PC-3 (cell line): ENCODE measurements at regions of chr16 and their contacts with region 1.

Region 1: GRCh38 chr16:70746708-70747424 is 54.1 kb downstream of the VAC14 start:
- DNase-seq: peak; percentile 94
- ATAC-seq: peak; percentile 89
- H3K4me3 ChIP-seq: peak overlapping the region; percentile 12; the same call in 1 of the 2 replicates
- H3K27ac ChIP-seq: peak overlapping the region; percentile 99
- H3K4me1 ChIP-seq: peaks cover 36% of the 10 kb centered on the region
- H3K27me3 ChIP-seq: no peaks in the 10 kb centered on the region
- CTCF ChIP-seq: no peak

Region 2: DNA sequence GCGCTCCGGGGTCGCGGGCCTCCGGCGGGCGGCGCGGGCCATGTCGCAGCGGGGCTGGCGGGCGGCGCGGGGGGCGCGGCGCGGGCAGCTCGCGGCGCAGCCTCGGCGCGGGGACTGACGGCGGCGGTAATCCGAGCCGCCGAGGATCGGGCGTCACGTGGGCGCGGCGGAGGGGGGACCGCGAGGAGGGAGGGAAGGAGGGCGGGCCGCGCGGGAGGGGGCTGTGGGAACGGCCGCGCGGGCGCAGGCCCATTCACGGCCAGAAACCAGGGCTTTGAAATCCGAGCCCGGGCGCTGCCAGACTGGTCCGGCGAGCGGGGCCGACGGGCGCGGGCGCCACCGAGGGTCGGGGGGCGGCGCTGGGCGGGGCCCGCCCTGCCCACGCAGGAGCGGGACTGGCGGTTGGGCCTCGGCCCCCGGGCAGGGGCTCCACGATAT is 60.9 kb before region 1 on chr16 and contains the start of gene MTSS2:
- CTCF ChIA-PET with region 1: no interaction called
- POLR2A ChIA-PET with region 1: no interaction called
- intact Hi-C with region 1: loop called (anchors 2 kb)
- DNase-seq: peak; percentile 78
- ATAC-seq: peak; percentile 67
- H3K4me3 ChIP-seq: peak within 1 kb of the TSS; percentile 94
- H3K27ac ChIP-seq: no peak within 1 kb of the TSS
- H3K4me1 ChIP-seq: peaks cover 18% of the 10 kb centered on the region
- H3K27me3 ChIP-seq: no peaks in the 10 kb centered on the region
- CTCF ChIP-seq: no peak
- total RNA-seq, gene MTSS2: 18.7 and 39.2 TPM in 2 replicates

Region 3: GRCh38 chr16:70691223-70692129 is 55.4 kb before region 1 on chr16:
- CTCF ChIA-PET with region 1: no interaction called
- POLR2A ChIA-PET with region 1: no interaction called
- intact Hi-C with region 1: loop called (anchors 2 kb)
- DNase-seq: no peak
- ATAC-seq: no peak
- H3K4me3 ChIP-seq: no peak overlapping the region
- H3K27ac ChIP-seq: no peak overlapping the region
- H3K4me1 ChIP-seq: peaks cover 38% of the 10 kb centered on the region
- H3K27me3 ChIP-seq: no peaks in the 10 kb centered on the region
- CTCF ChIP-seq: no peak

Region 4: GRCh38 chr16:70715055-70715858 is 31.6 kb before region 1 on chr16:
- CTCF ChIA-PET with region 1: no interaction called
- POLR2A ChIA-PET with region 1: no interaction called
- intact Hi-C with region 1: loop called (anchors 1 kb)
- DNase-seq: peak; percentile 98
- ATAC-seq: peak; percentile 95
- H3K4me3 ChIP-seq: peak overlapping the region; percentile 49; the same call in 1 of the 2 replicates
- H3K27ac ChIP-seq: peak overlapping the region; percentile 92
- H3K4me1 ChIP-seq: peaks cover 26% of the 10 kb centered on the region
- H3K27me3 ChIP-seq: no peaks in the 10 kb centered on the region
- CTCF ChIP-seq: peak; percentile 32; the same call in 1 of the 2 replicates

Region 5: GRCh38 chr16:70759666-70760065 is 12.8 kb after region 1 on chr16:
- CTCF ChIA-PET with region 1: no interaction called
- POLR2A ChIA-PET with region 1: interaction called, 6 read pairs
- intact Hi-C with region 1: loop called (anchors 1 kb)
- DNase-seq: no peak
- ATAC-seq: no peak
- H3K4me3 ChIP-seq: no peak overlapping the region
- H3K27ac ChIP-seq: no peak overlapping the region
- H3K4me1 ChIP-seq: peaks cover 21% of the 10 kb centered on the region
- H3K27me3 ChIP-seq: no peaks in the 10 kb centered on the region
- CTCF ChIP-seq: no peak